Caco-2 (cell line): ENCODE measurements at regions of chr3 and their contacts with region 1.

Region 1: GRCh38 chr3:194333212-194333980 is 17.7 kb downstream of the CPN2 start:
- DNase-seq: peak; percentile 90 to 95
- H3K4me3 ChIP-seq: peak overlapping the region; percentile 71
- H3K4me3 Mint-ChIP-seq: peak overlapping the region; percentile 88
- H3K27ac Mint-ChIP-seq: peak overlapping the region; percentile 92
- H3K4me1 ChIP-seq: peaks cover 26% of the 10 kb centered on the region
- H3K4me1 Mint-ChIP-seq: peaks cover 29% of the 10 kb centered on the region
- H3K27me3 ChIP-seq: no peaks in the 10 kb centered on the region
- H3K27me3 Mint-ChIP-seq: no peaks in the 10 kb centered on the region
- CTCF ChIP-seq: peak; percentile 95 to 97

Region 2: GRCh38 chr3:194344012-194344411 is 10.6 kb after region 1 on chr3:
- CTCF ChIA-PET with region 1: interaction called, 6 read pairs
- POLR2A ChIA-PET with region 1: no interaction called
- intact Hi-C with region 1: loop called (anchors 1 kb)
- DNase-seq: peak; percentile 68 to 81
- H3K4me3 ChIP-seq: no peak overlapping the region
- H3K4me3 Mint-ChIP-seq: no peak overlapping the region
- H3K27ac Mint-ChIP-seq: no peak overlapping the region
- H3K4me1 ChIP-seq: peaks cover 26% of the 10 kb centered on the region
- H3K4me1 Mint-ChIP-seq: peaks cover 24% of the 10 kb centered on the region
- H3K27me3 ChIP-seq: no peaks in the 10 kb centered on the region
- H3K27me3 Mint-ChIP-seq: no peaks in the 10 kb centered on the region
- CTCF ChIP-seq: peak; percentile 82 to 84

Region 3: GRCh38 chr3:194404365-194405140 is 71.2 kb after region 1 on chr3:
- CTCF ChIA-PET with region 1: interaction called, 4 read pairs
- POLR2A ChIA-PET with region 1: no interaction called
- intact Hi-C with region 1: loop called (anchors 1 kb)
- DNase-seq: peak in 1 of 2 experiments; percentile 65
- H3K4me3 ChIP-seq: no peak overlapping the region
- H3K4me3 Mint-ChIP-seq: no peak overlapping the region
- H3K27ac Mint-ChIP-seq: no peak overlapping the region
- H3K4me1 ChIP-seq: no peaks in the 10 kb centered on the region
- H3K4me1 Mint-ChIP-seq: no peaks in the 10 kb centered on the region
- H3K27me3 ChIP-seq: no peaks in the 10 kb centered on the region
- H3K27me3 Mint-ChIP-seq: no peaks in the 10 kb centered on the region
- CTCF ChIP-seq: peak; percentile 57 to 71